ENCODE measurements at regions of chr2 and their contacts with region 1.

Region 1: GRCh38 chr2:175126661-175127060 is 41.3 kb downstream of the ATF2 start:
- DNase-seq: no peak
- H3K4me3 ChIP-seq: no peak overlapping the region
- H3K27ac ChIP-seq: no peak overlapping the region
- H3K4me1 ChIP-seq: no peaks in the 10 kb centered on the region
- H3K27me3 ChIP-seq: no peaks in the 10 kb centered on the region
- CTCF ChIP-seq: no peak
- EP300 ChIP-seq: no peak
- POLR2A ChIP-seq: no peak
- RAD21 ChIP-seq: no peak

Region 2: DNA sequence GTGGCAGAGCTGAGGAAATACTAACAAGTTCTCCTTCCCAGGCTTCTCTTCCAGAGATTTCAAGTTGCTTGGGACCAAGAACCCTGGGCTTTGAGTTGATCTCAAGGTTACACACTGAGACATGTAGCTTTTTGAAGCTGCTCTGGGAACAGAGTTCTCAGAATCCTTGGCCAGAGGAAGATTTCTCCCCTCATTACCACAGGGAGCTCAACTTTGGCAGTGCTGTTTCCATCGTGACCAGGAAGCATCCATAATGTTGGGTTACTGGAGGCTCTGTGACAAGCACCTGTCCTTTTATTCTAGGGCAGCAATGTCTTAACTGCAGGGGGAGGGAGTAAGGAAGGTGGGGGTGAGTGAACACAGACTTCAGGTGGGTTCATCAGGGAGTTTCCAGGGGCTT is 320.9 kb before region 1 on chr2:
- CTCF ChIA-PET with region 1: no interaction called
- POLR2A ChIA-PET with region 1: no interaction called
- DNase-seq: no peak
- H3K4me3 ChIP-seq: no peak overlapping the region
- H3K27ac ChIP-seq: no peak overlapping the region
- H3K4me1 ChIP-seq: 0 out of 7 replicates have a peak, but pooled peaks cover 0 to 2% (median 0%) of the 10 kb centered on the region in 4 experiments
- H3K27me3 ChIP-seq: no peaks in the 10 kb centered on the region
- CTCF ChIP-seq: no peak
- EP300 ChIP-seq: no peak
- POLR2A ChIP-seq: no peak
- RAD21 ChIP-seq: no peak

Region 3: GRCh38 chr2:174985630-174986029 is 141.0 kb before region 1 on chr2:
- CTCF ChIA-PET with region 1: no interaction called
- POLR2A ChIA-PET with region 1: no interaction called
- DNase-seq: no peak
- H3K4me3 ChIP-seq: no peak overlapping the region
- H3K27ac ChIP-seq: no peak overlapping the region
- H3K4me1 ChIP-seq: no peaks in the 10 kb centered on the region; a peak in 2 of 7 replicates
- H3K27me3 ChIP-seq: no peaks in the 10 kb centered on the region
- CTCF ChIP-seq: peak in 2 of 3 experiments; percentile 37 to 40; a peak in 2 of 4 replicates
- EP300 ChIP-seq: no peak
- POLR2A ChIP-seq: no peak
- RAD21 ChIP-seq: peak; percentile 54 to 68

Region 4: DNA sequence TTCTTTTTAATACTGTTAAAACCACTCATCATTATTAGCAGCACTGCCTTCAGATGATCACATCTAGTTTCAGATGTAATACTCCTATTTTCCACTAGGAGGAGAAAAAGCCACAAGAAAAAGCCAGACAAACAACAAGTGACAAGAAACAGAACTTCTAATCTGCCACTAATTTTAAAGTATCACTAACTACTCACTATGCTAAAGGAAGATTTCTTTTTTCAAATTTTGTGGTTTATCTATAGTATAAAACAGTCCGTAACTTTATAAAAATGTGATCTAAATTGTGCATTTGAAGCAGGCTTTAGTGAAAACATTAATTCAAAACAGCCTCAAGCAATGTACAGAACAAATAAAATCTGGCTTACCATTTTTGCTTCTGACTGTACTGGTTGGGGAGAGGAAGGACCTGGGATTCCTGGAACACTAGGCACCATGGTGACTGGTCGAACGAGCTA is 15.4 kb before region 1 on chr2:
- CTCF ChIA-PET with region 1: interaction called, 24 read pairs
- POLR2A ChIA-PET with region 1: no interaction called
- DNase-seq: no peak
- H3K4me3 ChIP-seq: no peak overlapping the region
- H3K27ac ChIP-seq: no peak overlapping the region
- H3K4me1 ChIP-seq: no peaks in the 10 kb centered on the region
- H3K27me3 ChIP-seq: no peaks in the 10 kb centered on the region
- CTCF ChIP-seq: peak in 2 of 3 experiments; percentile 20 to 57; a peak in 2 of 4 replicates
- EP300 ChIP-seq: no peak
- POLR2A ChIP-seq: no peak
- RAD21 ChIP-seq: peak; percentile 50 to 59